Activated CD4-positive, alpha-beta T cell treated with anti-CD3 and anti-CD28 coated beads for 36 hours (primary cell): ENCODE measurements at regions of chr11 and their contacts with region 1.

Region 1: GRCh38 chr11:47176328-47177228 is at the start of gene ARFGAP2:
- DNase-seq: peak; percentile 98
- ATAC-seq: peak; percentile 95
- H3K4me3 Mint-ChIP-seq: peak within 1 kb of the TSS; percentile 96
- H3K27ac Mint-ChIP-seq: peak within 1 kb of the TSS; percentile 98
- H3K4me1 Mint-ChIP-seq: peaks cover 34% of the 10 kb centered on the region
- H3K27me3 Mint-ChIP-seq: no peaks in the 10 kb centered on the region
- total RNA-seq, gene ARFGAP2: 74.9 to 76.5 TPM

Region 2: DNA sequence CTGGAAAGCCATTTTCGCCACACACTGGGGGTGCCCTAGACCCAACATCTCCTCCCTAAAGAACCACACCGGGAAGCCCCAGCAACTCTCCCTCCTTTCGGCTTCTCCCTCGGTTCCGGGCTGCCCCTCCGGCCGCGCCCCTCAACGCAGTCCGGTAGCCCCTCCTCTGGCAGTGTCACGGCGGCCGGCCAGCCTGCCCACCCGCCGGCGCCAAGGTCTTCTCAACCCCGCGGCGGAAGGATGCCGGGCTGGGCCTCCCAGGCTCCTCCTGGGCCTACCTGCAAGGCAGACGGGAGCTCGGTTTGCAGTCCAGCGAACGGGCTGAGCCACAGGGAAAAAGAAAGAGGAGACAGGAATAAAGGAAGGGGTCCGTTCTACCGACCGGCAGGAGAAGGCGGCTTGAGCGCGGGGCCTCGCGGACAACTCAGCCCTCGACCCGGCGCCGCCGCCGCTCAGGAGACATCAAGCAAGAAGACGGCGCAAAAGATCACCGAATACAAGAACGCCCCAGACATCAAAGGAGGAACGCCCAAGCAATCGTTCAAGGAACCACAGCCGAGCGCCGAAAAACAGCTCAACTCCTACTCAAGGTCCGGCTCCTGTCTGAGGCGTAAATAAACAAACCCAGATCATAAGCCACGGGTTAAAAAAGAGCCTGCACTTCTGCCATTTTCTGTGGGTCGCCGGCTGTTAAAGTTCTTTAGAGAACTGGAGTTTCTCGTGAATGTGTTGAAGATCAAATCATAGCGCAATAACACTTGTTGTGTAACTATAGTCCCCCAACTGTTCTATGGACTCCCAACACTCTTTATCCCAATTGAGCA is 582.8 kb before region 1 on chr11 and contains the start of gene AMBRA1:
- CTCF ChIA-PET with region 1: no interaction called
- POLR2A ChIA-PET with region 1: no interaction called
- intact Hi-C with region 1: no loop called
- DNase-seq: peak; percentile 91
- ATAC-seq: peak; percentile 87
- H3K4me3 Mint-ChIP-seq: peak within 1 kb of the TSS; percentile 93
- H3K27ac Mint-ChIP-seq: peak within 1 kb of the TSS; percentile 91
- H3K4me1 Mint-ChIP-seq: peaks cover 40% of the 10 kb centered on the region
- H3K27me3 Mint-ChIP-seq: no peaks in the 10 kb centered on the region
- total RNA-seq, gene AMBRA1: 24.8 to 26.4 TPM

Region 3: DNA sequence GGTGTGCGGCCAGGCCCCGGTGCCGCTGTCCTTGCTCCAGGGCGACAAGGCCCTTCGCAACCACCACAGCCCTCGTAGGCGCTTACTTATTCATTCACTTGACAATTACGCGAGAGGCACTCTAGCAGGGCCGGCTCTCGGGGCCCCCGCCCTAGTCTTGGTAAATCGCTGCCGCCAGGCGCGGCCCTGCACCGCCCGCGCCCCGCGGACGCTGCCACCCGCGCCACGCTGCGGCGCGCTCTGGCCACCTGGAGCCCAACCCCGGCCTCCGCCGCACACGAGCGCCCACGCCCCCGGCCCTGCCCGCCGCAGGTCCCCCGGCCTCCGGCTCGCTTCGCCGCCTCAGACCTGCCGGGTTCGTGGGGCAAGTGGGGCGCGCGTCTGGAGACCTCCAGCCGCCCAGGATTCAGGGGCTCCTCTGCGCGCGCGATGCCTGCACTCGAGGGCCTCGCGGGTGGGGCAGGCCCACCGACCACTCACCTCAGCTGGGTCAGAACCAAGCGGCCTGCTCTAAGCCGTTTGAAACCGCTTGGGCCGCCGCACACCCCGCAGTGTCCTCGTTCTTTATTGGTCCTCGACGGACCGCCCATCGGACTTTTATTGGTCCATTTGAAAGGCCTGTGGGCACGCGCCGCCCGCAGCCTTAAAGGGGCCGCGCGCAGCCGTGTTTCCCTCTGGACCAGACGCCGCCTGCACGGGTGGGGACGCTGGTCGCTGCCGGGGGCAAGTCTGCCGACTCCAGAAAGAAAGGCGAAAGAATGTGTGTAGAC is 330.7 kb before region 1 on chr11 and contains the start of gene CKAP5:
- CTCF ChIA-PET with region 1: no interaction called
- POLR2A ChIA-PET with region 1: no interaction called
- intact Hi-C with region 1: loop called in 1 of 2 experiments (anchors 1 kb)
- DNase-seq: peak; percentile 92
- ATAC-seq: peak; percentile 92
- H3K4me3 Mint-ChIP-seq: peak within 1 kb of the TSS; percentile 86
- H3K27ac Mint-ChIP-seq: peak within 1 kb of the TSS; percentile 94
- H3K4me1 Mint-ChIP-seq: peaks cover 30% of the 10 kb centered on the region
- H3K27me3 Mint-ChIP-seq: no peaks in the 10 kb centered on the region
- total RNA-seq, gene CKAP5: 166 to 183 TPM

Region 4: DNA sequence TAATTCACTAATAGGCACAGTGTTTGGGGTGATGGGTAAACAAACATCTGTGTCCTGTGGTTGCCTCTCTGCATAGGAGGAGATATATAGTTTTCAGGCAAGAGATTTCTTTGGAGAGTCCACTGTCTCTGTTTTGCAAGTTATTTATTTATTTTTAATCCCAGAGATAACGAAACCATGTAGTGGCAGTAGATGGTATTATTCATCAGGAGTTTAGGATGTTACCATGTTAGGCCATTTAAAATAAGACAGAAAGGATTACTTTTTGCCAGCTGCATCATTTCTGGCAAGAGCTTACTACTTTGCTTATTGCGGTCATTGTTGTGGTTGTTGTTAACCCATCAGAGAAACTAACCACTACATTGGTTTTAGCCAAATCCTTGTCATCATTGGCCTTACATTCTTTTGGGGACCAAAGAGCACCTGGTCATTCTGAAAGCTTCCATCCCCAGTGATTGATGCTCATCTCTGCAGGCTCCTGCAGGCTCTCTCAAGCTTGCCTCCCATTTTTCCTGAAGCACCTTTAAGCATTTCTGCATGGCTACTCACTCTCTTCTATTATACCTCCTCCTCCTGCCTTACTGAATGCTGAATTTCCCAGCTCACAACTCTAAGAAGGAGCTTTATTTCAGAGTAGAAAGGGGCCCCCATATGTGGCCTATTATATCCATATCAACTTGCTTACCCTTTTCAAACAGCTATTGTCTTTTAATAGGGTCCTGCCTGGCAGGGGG is 155.6 kb before region 1 on chr11:
- CTCF ChIA-PET with region 1: no interaction called
- POLR2A ChIA-PET with region 1: no interaction called
- intact Hi-C with region 1: no loop called
- DNase-seq: no peak
- ATAC-seq: no peak
- H3K4me3 Mint-ChIP-seq: no peak overlapping the region
- H3K27ac Mint-ChIP-seq: no peak overlapping the region
- H3K4me1 Mint-ChIP-seq: no peaks in the 10 kb centered on the region
- H3K27me3 Mint-ChIP-seq: no peaks in the 10 kb centered on the region

Region 5: DNA sequence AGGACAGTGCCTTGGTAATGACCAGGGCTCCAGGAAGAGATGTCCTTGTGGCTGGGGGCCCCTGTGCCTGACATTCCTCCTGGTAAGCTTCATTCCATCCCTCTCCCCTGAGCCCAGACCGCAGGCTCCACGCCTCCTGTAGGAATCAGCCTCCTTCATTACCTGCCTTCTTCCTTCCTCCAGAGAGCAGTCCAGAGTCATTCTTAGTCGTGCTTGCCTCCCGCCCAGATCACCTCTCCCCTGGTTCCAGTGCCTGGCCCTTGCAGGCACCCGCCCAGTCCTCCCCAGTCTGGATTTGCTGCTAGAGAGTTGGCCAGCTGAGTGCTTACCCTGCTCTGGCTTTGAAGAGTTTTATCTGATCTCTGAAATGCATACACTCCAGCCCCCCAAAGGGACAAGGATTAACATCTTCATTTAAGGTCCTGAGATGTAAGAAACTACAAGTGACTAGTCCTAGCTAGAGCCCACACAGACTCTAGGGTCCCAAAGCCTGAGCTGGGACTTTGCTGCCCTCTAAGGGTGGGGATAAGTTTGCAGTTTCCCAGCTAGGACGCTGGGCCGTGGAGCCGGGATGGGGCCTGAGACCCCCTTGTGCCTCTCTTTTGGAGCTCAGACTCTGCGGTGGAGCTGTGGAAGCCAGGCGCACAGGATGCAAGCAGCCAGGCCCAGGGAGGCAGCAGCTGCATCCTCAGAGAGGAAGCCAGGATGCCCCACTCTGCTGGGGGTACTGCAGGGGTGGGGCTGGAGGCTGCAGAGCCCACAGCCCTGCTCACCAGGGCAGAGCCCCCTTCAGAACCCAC is 82.8 kb after region 1 on chr11:
- CTCF ChIA-PET with region 1: interaction called, 17 read pairs
- POLR2A ChIA-PET with region 1: no interaction called
- intact Hi-C with region 1: loop called in 1 of 2 experiments (anchors 2 kb)
- DNase-seq: peak; percentile 58
- ATAC-seq: peak; percentile 86
- H3K4me3 Mint-ChIP-seq: no peak overlapping the region
- H3K27ac Mint-ChIP-seq: no peak overlapping the region
- H3K4me1 Mint-ChIP-seq: peaks cover 3% of the 10 kb centered on the region
- H3K27me3 Mint-ChIP-seq: no peaks in the 10 kb centered on the region

Region 6: GRCh38 chr11:47407746-47408590 is 231.4 kb after region 1 on chr11 and contains the start of gene SLC39A13:
- CTCF ChIA-PET with region 1: interaction called, 3 read pairs
- POLR2A ChIA-PET with region 1: interaction called, 3 read pairs
- intact Hi-C with region 1: loop called (anchors 1 kb)
- DNase-seq: peak; percentile 95
- ATAC-seq: peak; percentile 91
- H3K4me3 Mint-ChIP-seq: peak within 1 kb of the TSS; percentile 89
- H3K27ac Mint-ChIP-seq: peak within 1 kb of the TSS; percentile 94
- H3K4me1 Mint-ChIP-seq: peaks cover 16% of the 10 kb centered on the region
- H3K27me3 Mint-ChIP-seq: no peaks in the 10 kb centered on the region
- total RNA-seq, gene SLC39A13: 8.6 to 10.7 TPM

Region 7: GRCh38 chr11:47578524-47579460 is 402.2 kb after region 1 on chr11 and contains the starts of genes KBTBD4 and NDUFS3:
- CTCF ChIA-PET with region 1: no interaction called
- POLR2A ChIA-PET with region 1: no interaction called
- intact Hi-C with region 1: loop called in 1 of 2 experiments (anchors 2 kb)
- DNase-seq: peak; percentile 92
- ATAC-seq: peak; percentile 96
- H3K4me3 Mint-ChIP-seq: peak within 1 kb of the TSS; percentile 87
- H3K27ac Mint-ChIP-seq: peak within 1 kb of the TSS; percentile 93
- H3K4me1 Mint-ChIP-seq: peaks cover 39% of the 10 kb centered on the region
- H3K27me3 Mint-ChIP-seq: no peaks in the 10 kb centered on the region
- total RNA-seq, gene KBTBD4: 11.9 to 18.4 TPM
- total RNA-seq, gene NDUFS3: 96.9 to 108 TPM

Region 8: GRCh38 chr11:48261600-48261999 is 1085.0 kb after region 1 on chr11:
- CTCF ChIA-PET with region 1: no interaction called
- POLR2A ChIA-PET with region 1: no interaction called
- intact Hi-C with region 1: no loop called
- DNase-seq: no peak
- ATAC-seq: no peak
- H3K4me3 Mint-ChIP-seq: no peak overlapping the region
- H3K27ac Mint-ChIP-seq: no peak overlapping the region
- H3K4me1 Mint-ChIP-seq: no peaks in the 10 kb centered on the region
- H3K27me3 Mint-ChIP-seq: peaks cover 8% of the 10 kb centered on the region